ENCODE measurements at regions of chr2 and their contacts with region 1.

Region 1: GRCh38 chr2:20446917-20447436 is at the start of gene RHOB:
- H3K4me3 Mint-ChIP-seq: peak within 1 kb of the TSS; percentile 90
- H3K27ac Mint-ChIP-seq: peak within 1 kb of the TSS; percentile 88
- H3K4me1 Mint-ChIP-seq: peaks cover 39% of the 10 kb centered on the region
- H3K27me3 Mint-ChIP-seq: peaks cover 10% of the 10 kb centered on the region

Region 2: GRCh38 chr2:20350753-20351554 is 96.0 kb before region 1 on chr2 and contains the start of gene PUM2:
- intact Hi-C with region 1: loop called (anchors 2 kb)
- H3K4me3 Mint-ChIP-seq: peak within 1 kb of the TSS; percentile 94
- H3K27ac Mint-ChIP-seq: no peak within 1 kb of the TSS
- H3K4me1 Mint-ChIP-seq: peaks cover 21% of the 10 kb centered on the region
- H3K27me3 Mint-ChIP-seq: no peaks in the 10 kb centered on the region

Region 3: DNA sequence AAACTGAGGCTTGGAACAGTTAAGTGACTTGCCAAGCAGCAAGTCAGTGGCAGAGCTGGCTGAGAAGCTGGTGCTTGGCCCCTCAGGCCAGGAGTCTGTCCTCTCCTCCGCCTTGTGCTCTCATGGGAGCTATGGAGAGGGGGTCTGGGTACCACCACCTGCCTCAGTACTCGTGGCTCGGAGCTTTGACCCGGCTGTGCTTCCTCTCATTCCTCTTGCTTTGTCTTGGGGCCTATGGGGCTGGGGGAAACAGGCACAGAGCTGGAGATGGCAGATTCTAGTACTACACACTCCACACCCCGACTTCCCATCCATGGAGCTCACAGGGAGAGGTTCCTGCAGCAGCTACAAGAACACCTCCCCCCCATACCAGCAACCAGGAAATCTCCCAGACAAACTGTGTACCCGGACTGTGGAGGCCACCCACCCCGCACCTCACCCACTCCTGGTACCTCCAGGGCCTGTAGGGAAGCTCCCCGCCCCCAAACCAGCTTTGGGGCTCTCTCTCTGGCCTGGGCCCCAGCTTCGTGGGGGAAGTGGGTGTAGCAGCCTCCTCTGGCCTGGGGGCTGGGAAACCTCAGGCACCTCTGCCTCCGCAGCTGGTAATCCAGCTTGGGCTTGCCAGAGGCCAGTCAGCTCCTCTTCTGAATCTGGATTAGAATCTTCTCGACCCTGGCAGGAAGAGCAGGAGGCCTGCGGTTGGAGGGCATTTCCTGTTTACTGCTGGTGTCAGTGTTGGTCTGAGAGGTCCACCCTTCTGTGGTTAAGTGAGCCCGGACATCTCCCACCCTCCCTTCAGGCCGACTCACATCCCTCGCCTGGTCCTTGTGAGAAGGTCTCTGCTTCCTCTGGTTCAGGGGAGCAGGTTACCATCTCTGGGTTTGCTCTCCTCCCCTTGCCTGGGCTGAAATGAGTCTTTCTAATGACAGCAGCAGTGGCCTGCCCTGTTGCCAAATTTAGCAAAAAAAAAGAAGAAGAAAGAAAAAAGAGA is 22.4 kb before region 1 on chr2:
- intact Hi-C with region 1: loop called (anchors 2 kb)
- H3K4me3 Mint-ChIP-seq: peak overlapping the region; percentile 77
- H3K27ac Mint-ChIP-seq: peak overlapping the region; percentile 99
- H3K4me1 Mint-ChIP-seq: peaks cover 88% of the 10 kb centered on the region
- H3K27me3 Mint-ChIP-seq: no peaks in the 10 kb centered on the region

Region 4: GRCh38 chr2:20635675-20636584 is 189.0 kb after region 1 on chr2:
- intact Hi-C with region 1: loop called (anchors 1 kb)
- H3K4me3 Mint-ChIP-seq: no peak overlapping the region
- H3K27ac Mint-ChIP-seq: no peak overlapping the region
- H3K4me1 Mint-ChIP-seq: peaks cover 6% of the 10 kb centered on the region
- H3K27me3 Mint-ChIP-seq: no peaks in the 10 kb centered on the region

Region 5: DNA sequence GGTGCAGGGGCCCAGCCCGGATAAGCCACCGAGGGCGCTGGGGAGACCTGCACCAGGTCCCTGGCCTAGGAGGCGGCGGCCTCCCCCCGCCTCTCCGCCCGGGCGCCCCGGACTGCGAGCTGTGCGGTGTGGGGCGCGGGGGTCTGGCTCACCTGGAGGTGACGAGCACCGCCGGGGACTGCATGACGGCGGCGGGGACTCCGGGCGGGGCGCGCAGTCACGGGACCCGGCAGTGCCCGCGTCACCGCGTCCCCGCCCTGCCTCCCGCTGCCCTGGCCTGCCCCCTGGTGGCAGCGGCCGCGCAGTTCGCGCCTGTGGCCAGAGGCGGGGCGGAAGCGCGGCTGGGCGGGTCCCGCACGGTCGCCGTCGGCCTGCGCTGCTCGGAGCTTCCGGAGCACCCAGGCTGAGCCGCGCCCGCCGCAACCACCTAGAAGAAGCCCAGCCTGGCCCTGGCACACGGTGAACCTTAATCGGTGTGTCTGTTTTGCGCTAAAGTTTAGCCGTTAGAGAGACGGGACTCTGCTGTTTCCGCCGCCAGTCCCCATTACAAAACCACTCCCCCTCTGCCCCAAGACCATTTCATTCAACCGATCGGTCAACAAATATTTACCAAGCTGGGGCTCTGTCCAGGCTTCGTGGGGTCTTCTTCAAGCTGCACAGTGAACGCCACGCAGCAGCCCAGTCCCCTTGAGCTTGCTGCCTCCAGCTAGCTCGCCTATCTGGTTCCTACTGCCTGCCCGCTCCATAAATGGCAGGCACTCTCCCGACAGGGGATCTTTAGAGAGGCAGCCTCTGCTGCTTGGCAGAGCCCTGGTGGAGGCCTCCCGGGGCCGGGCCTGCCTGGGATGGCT is 204.1 kb after region 1 on chr2 and contains the start of gene HS1BP3:
- intact Hi-C with region 1: loop called (anchors 2 kb)
- H3K4me3 Mint-ChIP-seq: peak within 1 kb of the TSS; percentile 96
- H3K27ac Mint-ChIP-seq: peak within 1 kb of the TSS; percentile 90
- H3K4me1 Mint-ChIP-seq: peaks cover 36% of the 10 kb centered on the region
- H3K27me3 Mint-ChIP-seq: peaks cover 5% of the 10 kb centered on the region

Measured in dendritic cell treated with granulocyte-macrophage colony-stimulating factor and Interleukin-4, amounts not matched to agents 40 ng/mL and 50 ng/mL, for 4 days (primary cell).